Activated CD4-positive, alpha-beta T cell treated with anti-CD3 and anti-CD28 coated beads, Interleukin-2, amount 10 ng/mL, durations not matched to agents 24 days and 14 days (primary cell): ENCODE measurements at regions of chr5 and their contacts with region 1.

Region 1: GRCh38 chr5:41748631-41749030 is 121.6 kb downstream of the OXCT1 start:
- DNase-seq: no peak
- H3K4me3 Mint-ChIP-seq: no peak overlapping the region
- H3K27ac Mint-ChIP-seq: no peak overlapping the region
- H3K4me1 Mint-ChIP-seq: peaks cover 24% of the 10 kb centered on the region
- H3K27me3 Mint-ChIP-seq: no peaks in the 10 kb centered on the region

Region 2: DNA sequence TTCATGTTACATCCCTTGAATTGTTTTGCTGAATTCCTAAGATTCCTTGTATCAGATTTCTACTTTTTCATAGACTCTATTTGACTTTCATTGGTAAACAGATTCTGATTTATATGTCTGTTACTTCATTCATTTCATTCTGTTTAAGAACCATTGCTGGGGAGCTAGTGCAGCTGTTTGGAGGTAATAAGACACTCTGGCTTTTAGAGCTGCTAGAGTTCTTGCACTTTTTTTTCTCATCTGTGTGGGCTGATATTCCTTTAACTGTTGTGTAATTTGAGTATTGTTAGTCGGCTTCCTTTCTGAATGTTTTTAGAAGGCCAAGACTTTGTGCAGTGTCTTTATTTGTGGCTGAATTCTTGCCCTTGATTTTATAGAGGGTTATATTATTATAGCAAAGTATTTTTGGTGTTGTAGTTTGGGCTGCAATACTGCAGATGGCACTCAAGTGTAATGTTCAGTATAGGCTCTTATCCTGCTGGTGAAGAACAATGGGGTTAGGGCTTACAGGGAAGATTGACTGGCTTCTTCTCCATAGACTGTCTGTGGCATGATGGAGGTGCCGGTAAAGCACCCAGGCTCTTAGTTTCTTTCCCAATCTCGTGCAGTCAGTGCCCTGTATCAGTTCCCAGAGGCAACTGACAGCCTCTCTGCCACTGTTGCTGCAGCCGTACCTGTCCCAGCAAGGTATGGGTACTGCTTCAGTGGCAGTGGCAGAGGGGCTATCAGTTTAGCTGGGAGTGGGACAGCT is 40.6 kb before region 1 on chr5:
- intact Hi-C with region 1: no loop called
- DNase-seq: no peak
- H3K4me3 Mint-ChIP-seq: no peak overlapping the region
- H3K27ac Mint-ChIP-seq: no peak overlapping the region
- H3K4me1 Mint-ChIP-seq: no peaks in the 10 kb centered on the region
- H3K27me3 Mint-ChIP-seq: peaks cover 28% of the 10 kb centered on the region

Region 3: DNA sequence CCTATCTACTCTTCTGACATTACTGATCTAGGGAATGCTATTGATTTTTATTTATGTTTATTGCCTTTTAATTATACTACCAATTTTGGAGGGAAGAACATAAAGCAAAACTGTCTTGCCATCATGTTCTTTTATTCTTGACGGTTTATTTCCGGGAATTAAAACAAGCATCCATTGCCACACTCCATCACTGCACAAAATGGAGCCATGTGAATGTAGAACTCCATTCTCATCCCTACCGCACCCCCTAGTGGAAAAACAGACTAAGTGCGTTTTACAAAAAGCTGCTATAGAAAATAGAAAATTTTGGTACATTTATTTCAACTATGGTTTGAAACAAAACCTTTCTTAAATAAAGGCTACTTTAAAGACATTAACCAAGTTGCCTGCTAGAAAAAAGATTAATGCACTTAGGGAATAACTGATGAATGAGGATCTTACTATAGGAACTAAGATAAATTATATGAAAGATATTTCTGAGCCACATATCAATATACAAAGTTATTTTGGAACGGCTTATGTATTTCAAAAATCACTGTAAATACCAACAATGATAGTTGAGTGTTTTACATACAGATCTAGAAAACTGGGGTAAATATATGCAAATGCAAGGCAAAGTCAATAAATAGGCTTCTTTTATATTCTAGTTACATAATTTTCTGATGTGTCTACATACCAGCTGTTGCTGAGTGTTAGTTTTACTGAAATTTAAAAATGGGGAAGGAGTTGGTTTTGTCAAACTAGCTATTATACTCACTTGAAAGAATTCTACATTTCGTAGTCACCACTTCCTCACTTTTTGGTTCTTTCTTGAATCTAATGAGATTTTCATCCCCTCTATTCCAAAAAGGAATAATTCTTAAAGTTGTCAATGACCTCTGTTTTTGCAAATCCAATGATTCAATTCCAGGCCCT is 95.1 kb after region 1 on chr5:
- intact Hi-C with region 1: loop called (anchors 5 kb)
- DNase-seq: peak; percentile 77
- H3K4me3 Mint-ChIP-seq: no peak overlapping the region
- H3K27ac Mint-ChIP-seq: no peak overlapping the region
- H3K4me1 Mint-ChIP-seq: peaks cover 7% of the 10 kb centered on the region
- H3K27me3 Mint-ChIP-seq: no peaks in the 10 kb centered on the region

Region 4: GRCh38 chr5:41851116-41851515 is 102.5 kb after region 1 on chr5:
- intact Hi-C with region 1: loop called (anchors 1 kb)
- DNase-seq: no peak
- H3K4me3 Mint-ChIP-seq: peak overlapping the region; percentile 65
- H3K27ac Mint-ChIP-seq: peak overlapping the region; percentile 76
- H3K4me1 Mint-ChIP-seq: peaks cover 18% of the 10 kb centered on the region
- H3K27me3 Mint-ChIP-seq: no peaks in the 10 kb centered on the region